IMR-90 (cell line): ENCODE measurements at regions of chr2 and their contacts with region 1.

Region 1: GRCh38 chr2:190693533-190694232 is 44.8 kb downstream of the NAB1 start:
- DNase-seq: no peak
- ATAC-seq: no peak
- H3K4me3 ChIP-seq: no peak overlapping the region
- H3K27ac ChIP-seq: no peak overlapping the region
- H3K4me1 ChIP-seq: no peaks in the 10 kb centered on the region; the same call in 1 of the 2 replicates
- H3K27me3 ChIP-seq: no peaks in the 10 kb centered on the region
- CTCF ChIP-seq: no peak
- POLR2A ChIP-seq: no peak
- RAD21 ChIP-seq: no peak

Region 2: GRCh38 chr2:190443778-190444481 is 249.8 kb before region 1 on chr2:
- CTCF ChIA-PET with region 1: no interaction called
- POLR2A ChIA-PET with region 1: no interaction called
- dilution Hi-C with region 1: no loop called
- in situ Hi-C with region 1: no loop called
- intact Hi-C with region 1: no loop called
- DNase-seq: peak; percentile 67
- ATAC-seq: 0 out of 2 replicates have a peak, but pooled peaks have one; percentile 29
- H3K4me3 ChIP-seq: no peak overlapping the region
- H3K27ac ChIP-seq: no peak overlapping the region
- H3K4me1 ChIP-seq: peaks cover 4% of the 10 kb centered on the region
- H3K27me3 ChIP-seq: no peaks in the 10 kb centered on the region
- CTCF ChIP-seq: no peak
- POLR2A ChIP-seq: no peak
- RAD21 ChIP-seq: no peak

Region 3: GRCh38 chr2:190744041-190744440 is 50.4 kb after region 1 on chr2:
- CTCF ChIA-PET with region 1: no interaction called
- POLR2A ChIA-PET with region 1: no interaction called
- dilution Hi-C with region 1: no loop called
- in situ Hi-C with region 1: no loop called
- intact Hi-C with region 1: loop called (anchors 5 kb)
- DNase-seq: no peak
- ATAC-seq: no peak
- H3K4me3 ChIP-seq: no peak overlapping the region
- H3K27ac ChIP-seq: no peak overlapping the region
- H3K4me1 ChIP-seq: peaks cover 2% of the 10 kb centered on the region; the same call in 1 of the 2 replicates
- H3K27me3 ChIP-seq: peaks cover 3% of the 10 kb centered on the region
- CTCF ChIP-seq: no peak
- POLR2A ChIP-seq: no peak
- RAD21 ChIP-seq: no peak